Activated T-helper 2 cell treated with anti-CD3 and anti-CD28 coated beads, Interferon-gamma antibody, Interleukin-2, Interleukin-4, amounts not matched to agents 10 μg/mL and 5 μg/mL and 100 μg/mL, durations not matched to agents 14 hours and 24 hours and 36 hours (primary cell): ENCODE measurements at regions of chr3 and their contacts with region 1.

Region 1: GRCh38 chr3:70771426-70772147 is 459.1 kb upstream of the MDFIC2 start:
- DNase-seq: no peak
- H3K4me3 Mint-ChIP-seq: no peak overlapping the region
- H3K27ac Mint-ChIP-seq: no peak overlapping the region
- H3K4me1 Mint-ChIP-seq: peaks cover 4% of the 10 kb centered on the region
- H3K27me3 Mint-ChIP-seq: peaks cover 52% of the 10 kb centered on the region

Region 2: GRCh38 chr3:70856414-70857162 is 85.0 kb after region 1 on chr3:
- intact Hi-C with region 1: loop called (anchors 2 kb)
- DNase-seq: no peak
- H3K4me3 Mint-ChIP-seq: no peak overlapping the region
- H3K27ac Mint-ChIP-seq: peak overlapping the region; percentile 45
- H3K4me1 Mint-ChIP-seq: peaks cover 28% of the 10 kb centered on the region
- H3K27me3 Mint-ChIP-seq: peaks cover 26% of the 10 kb centered on the region